AG04450 (cell line): ENCODE measurements at regions of chr4 and their contacts with region 1.

Region 1: DNA sequence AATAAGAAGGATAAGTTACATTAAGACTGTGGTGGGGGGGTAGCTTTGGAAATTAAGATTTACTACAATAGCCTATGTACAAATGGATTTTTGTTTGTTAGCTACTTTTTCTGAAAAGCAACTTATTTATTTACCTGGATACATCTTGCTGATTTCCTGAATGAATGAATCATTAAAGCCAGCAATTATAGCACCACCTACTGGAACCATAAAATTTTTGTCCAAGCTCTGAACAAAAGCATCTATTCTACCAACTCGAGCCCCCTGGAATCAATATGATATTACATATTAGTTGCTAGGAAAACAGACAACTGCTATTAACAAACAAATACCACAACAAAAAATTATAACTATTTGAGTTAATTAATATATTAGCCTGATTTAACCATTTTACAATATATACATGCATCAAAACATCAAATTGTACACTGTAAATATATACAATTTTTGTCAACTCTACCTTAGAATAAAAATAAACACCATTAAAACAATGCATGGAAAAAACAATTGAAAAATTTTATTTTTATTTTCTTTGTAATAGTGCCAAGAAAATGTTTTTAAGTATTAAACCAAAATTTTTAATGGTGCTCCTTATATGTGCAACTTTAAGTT is 15.3 kb downstream of the SEPSECS start:
- DNase-seq: no peak
- H3K4me3 ChIP-seq: no peak overlapping the region
- H3K27ac ChIP-seq: no peak overlapping the region
- H3K27me3 ChIP-seq: no peaks in the 10 kb centered on the region
- CTCF ChIP-seq: peak; percentile 75

Region 2: DNA sequence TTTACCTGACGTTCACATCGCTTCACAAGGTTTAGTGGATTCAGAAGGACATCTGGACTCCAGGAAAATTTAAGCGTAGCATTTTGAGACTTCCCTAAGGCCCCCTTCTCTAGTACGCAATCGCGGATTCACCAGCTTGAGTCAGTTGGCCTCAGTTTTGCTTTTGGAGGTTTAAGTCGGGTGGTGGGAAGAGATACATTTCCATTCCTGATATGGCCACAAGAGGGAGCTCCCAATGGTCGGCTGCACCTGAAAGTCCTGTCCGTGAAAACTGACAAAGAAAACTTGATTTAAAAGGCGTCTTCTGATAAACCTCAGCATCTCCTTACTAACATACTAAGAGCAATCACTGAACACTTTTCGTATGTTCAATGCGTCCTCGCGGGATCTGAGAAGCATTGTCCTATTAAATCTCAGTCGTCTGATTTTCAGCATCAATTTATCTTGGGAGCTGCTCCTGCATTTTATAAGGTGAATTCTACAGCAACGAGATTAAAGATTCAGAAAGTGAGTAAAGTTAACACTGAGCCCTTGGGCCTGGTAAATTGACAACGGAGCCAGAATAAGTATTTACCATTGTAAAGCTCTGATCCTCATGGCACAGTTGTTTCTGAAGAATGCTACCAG is 164.8 kb before region 1 on chr4:
- CTCF ChIA-PET with region 1: interaction called, 25 read pairs
- POLR2A ChIA-PET with region 1: no interaction called
- DNase-seq: peak; percentile 29
- H3K4me3 ChIP-seq: no peak overlapping the region
- H3K27ac ChIP-seq: no peak overlapping the region
- H3K27me3 ChIP-seq: peaks cover 7% of the 10 kb centered on the region
- CTCF ChIP-seq: peak; percentile 93

Region 3: DNA sequence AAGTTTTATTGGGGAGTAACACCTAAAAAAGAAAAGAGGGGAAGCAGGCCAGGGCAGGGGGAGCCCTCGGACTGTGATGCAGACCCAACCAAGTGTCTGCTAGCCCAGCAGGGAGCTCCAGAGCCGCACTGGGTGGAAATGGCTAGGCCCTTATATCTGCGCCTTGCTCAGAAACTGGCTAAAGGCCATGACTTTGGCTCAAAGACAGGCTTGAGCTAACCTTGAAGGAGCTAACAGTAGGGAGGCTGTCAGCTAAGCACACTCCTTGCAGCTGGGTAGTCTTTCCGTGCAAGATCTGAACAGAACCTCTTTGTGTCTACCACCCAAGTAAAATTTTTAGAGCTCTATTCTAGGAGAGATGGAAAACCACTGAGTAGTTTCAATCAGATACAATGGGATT is 27.7 kb before region 1 on chr4:
- CTCF ChIA-PET with region 1: interaction called, 14 read pairs
- POLR2A ChIA-PET with region 1: no interaction called
- DNase-seq: no peak
- H3K4me3 ChIP-seq: no peak overlapping the region
- H3K27ac ChIP-seq: no peak overlapping the region
- H3K27me3 ChIP-seq: peaks cover 5% of the 10 kb centered on the region
- CTCF ChIP-seq: no peak

Region 4: DNA sequence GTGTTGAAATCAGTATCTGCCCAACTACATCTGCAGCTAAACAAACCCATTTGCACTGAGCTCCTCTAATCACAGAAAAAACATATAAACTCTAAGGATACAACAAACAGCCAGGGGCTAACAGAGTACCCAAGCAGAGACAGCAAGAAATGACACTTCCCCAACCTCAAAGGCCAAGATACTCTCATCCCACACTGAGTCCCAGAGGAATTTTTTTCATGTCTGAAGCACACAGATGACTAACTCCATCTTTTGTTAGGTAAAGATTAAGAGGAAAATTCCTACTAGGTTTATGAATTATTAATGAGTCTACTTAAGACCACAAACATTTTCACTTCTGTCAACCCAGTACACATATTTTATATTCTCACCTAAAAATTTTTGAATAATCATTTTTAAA is 16.3 kb before region 1 on chr4:
- CTCF ChIA-PET with region 1: interaction called, 40 read pairs
- POLR2A ChIA-PET with region 1: no interaction called
- DNase-seq: no peak
- H3K4me3 ChIP-seq: no peak overlapping the region
- H3K27ac ChIP-seq: no peak overlapping the region
- H3K27me3 ChIP-seq: no peaks in the 10 kb centered on the region
- CTCF ChIP-seq: no peak

Region 5: GRCh38 chr4:25159884-25160713 is 15.1 kb after region 1 on chr4 and contains the start of gene SEPSECS:
- CTCF ChIA-PET with region 1: interaction called, 13 read pairs
- POLR2A ChIA-PET with region 1: no interaction called
- DNase-seq: peak; percentile 94
- H3K4me3 ChIP-seq: peak within 1 kb of the TSS; percentile 89
- H3K27ac ChIP-seq: peak within 1 kb of the TSS; percentile 82
- H3K27me3 ChIP-seq: no peaks in the 10 kb centered on the region
- CTCF ChIP-seq: no peak
- polyA plus RNA-seq, gene SEPSECS: 4.7 and 6.2 TPM in 2 replicates

Region 6: GRCh38 chr4:25172961-25173915 is 28.3 kb after region 1 on chr4:
- CTCF ChIA-PET with region 1: interaction called, 12 read pairs
- POLR2A ChIA-PET with region 1: no interaction called
- DNase-seq: peak; percentile 96
- H3K4me3 ChIP-seq: peak overlapping the region; percentile 17; the same call in 1 of the 2 replicates
- H3K27ac ChIP-seq: peak overlapping the region; percentile 72
- H3K27me3 ChIP-seq: no peaks in the 10 kb centered on the region
- CTCF ChIP-seq: no peak

Region 7: GRCh38 chr4:25367004-25367621 is 222.1 kb after region 1 on chr4:
- CTCF ChIA-PET with region 1: interaction called, 17 read pairs
- POLR2A ChIA-PET with region 1: no interaction called
- DNase-seq: peak; percentile 16
- H3K4me3 ChIP-seq: no peak overlapping the region
- H3K27ac ChIP-seq: no peak overlapping the region
- H3K27me3 ChIP-seq: no peaks in the 10 kb centered on the region
- CTCF ChIP-seq: peak; percentile 72

Region 8: GRCh38 chr4:25638806-25639205 is 493.8 kb after region 1 on chr4:
- CTCF ChIA-PET with region 1: no interaction called
- POLR2A ChIA-PET with region 1: no interaction called
- DNase-seq: no peak
- H3K4me3 ChIP-seq: no peak overlapping the region
- H3K27ac ChIP-seq: no peak overlapping the region
- H3K27me3 ChIP-seq: no peaks in the 10 kb centered on the region
- CTCF ChIP-seq: no peak